ENCODE measurements at regions of chr4 and their contacts with region 1.

Region 1: GRCh38 chr4:86497980-86498862 is 95.9 kb upstream of the PTPN13 start:
- DNase-seq: no peak
- ATAC-seq: peak; percentile 69

Region 2: GRCh38 chr4:86895692-86896488 is 397.7 kb after region 1 on chr4:
- intact Hi-C with region 1: loop called (anchors 2 to 10 kb)
- DNase-seq: no peak
- ATAC-seq: peak; percentile 39

Measured in left colon (tissue), 2 donors.